CD4-positive, alpha-beta memory T cell (primary cell): ENCODE measurements at regions of chr5 and their contacts with region 1.

Region 1: DNA sequence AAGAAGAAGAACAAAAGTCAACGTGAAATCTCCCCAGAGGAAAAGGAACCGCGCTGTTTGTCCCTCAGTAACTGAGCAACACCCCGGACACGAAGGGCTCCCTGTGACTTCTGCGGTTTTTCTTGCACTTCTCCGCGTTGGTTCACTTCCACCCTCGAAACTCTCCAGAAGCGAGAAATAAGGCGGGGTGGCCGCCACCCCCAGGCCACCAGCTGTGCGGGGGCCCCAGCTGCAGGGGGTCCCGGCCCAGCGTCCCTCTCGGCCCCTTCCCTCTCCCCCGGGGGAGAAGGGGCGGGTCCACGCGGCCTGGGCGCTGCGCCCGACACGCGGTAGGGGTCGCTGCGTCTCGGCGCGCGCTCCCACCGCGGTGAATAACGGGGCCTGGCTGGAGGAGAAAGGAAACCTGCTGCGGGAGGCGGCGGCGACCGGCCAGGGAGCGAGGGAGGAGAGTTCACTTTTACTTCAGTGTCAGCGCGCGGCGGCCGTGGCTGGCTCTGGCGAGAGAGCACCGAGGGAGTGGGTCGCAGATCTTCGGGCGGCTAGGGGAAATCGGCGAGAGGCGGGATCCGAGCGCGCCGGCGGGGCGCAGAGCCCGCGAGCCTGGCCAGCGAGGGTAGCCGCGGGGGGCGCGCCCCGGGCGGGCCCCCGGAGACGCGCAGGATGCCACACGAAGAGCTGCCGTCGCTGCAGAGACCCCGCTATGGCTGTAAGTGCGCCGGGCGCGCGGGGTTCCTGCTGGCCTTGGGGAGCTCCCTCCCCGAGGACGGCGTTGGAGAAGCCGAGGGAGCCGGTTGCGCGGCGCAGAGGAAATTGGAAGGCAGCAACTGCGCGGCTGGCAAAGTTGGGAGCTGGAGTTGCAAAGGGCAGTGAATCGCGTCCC is at the start of gene IQGAP2:
- DNase-seq: peak; percentile 91 to 96 (median 94)
- H3K4me3 ChIP-seq: peak within 1 kb of the TSS; percentile 68 to 82
- H3K4me3 Mint-ChIP-seq: peak within 1 kb of the TSS; percentile 95 to 98 (median 97)
- H3K27ac ChIP-seq: peak within 1 kb of the TSS; percentile 93
- H3K27ac Mint-ChIP-seq: peak within 1 kb of the TSS; percentile 96 to 99 (median 98)
- H3K4me1 ChIP-seq: peaks cover 56% of the 10 kb centered on the region
- H3K4me1 Mint-ChIP-seq: peaks cover 45 to 72% (median 54%) of the 10 kb centered on the region in 4 donors
- H3K27me3 ChIP-seq: no peaks in the 10 kb centered on the region
- H3K27me3 Mint-ChIP-seq: no peaks in the 10 kb centered on the region
- total RNA-seq, gene IQGAP2: 125 to 126 TPM

Region 2: GRCh38 chr5:75717082-75717922 is 685.8 kb before region 1 on chr5 and contains the start of gene POC5:
- CTCF ChIA-PET with region 1: no interaction called
- POLR2A ChIA-PET with region 1: no interaction called
- intact Hi-C with region 1: loop called (anchors 1 kb)
- DNase-seq: peak; percentile 98 to 99 (median 98)
- H3K4me3 ChIP-seq: peak within 1 kb of the TSS; percentile 74 to 95
- H3K4me3 Mint-ChIP-seq: peak within 1 kb of the TSS; percentile 99 to 100 (median 100)
- H3K27ac ChIP-seq: peak within 1 kb of the TSS; percentile 74
- H3K27ac Mint-ChIP-seq: peak within 1 kb of the TSS; percentile 98 to 100 (median 99)
- H3K4me1 ChIP-seq: peaks cover 18% of the 10 kb centered on the region
- H3K4me1 Mint-ChIP-seq: peaks cover 29 to 43% (median 36%) of the 10 kb centered on the region in 4 donors
- H3K27me3 ChIP-seq: no peaks in the 10 kb centered on the region
- H3K27me3 Mint-ChIP-seq: no peaks in the 10 kb centered on the region
- total RNA-seq, gene POC5: 15.1 to 20.0 TPM

Region 3: DNA sequence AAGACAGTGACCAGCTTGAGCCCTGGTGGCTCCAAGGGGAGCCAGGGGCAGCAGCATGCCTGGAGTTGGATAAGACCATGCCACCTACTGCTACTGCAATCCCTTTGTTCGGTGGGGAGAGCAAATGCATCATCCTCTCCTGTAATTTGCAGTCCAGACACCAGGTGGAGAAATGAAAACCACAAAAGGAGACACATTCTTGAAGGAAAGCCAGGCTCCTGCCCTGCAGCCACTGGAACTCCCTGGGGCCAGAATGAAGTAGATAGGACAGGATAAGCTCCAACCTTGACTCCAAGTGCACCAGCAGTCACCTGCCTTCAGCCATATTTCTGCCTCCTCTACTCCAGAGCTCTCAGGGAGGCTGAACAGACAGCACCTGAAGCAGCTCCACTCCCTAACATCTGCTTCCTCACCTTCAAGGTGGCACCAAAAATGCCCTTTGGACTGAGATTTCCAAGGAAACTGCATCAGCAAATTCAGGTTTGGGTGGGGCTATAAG is 65.1 kb before region 1 on chr5:
- CTCF ChIA-PET with region 1: interaction called, 17 read pairs
- POLR2A ChIA-PET with region 1: interaction called, 55 read pairs
- intact Hi-C with region 1: loop called (anchors 1 kb)
- DNase-seq: peak; percentile 55 to 62 (median 58)
- H3K4me3 ChIP-seq: no peak overlapping the region
- H3K4me3 Mint-ChIP-seq: peak overlapping the region in 4 of 8 donors; percentile 16 to 54 (median 25)
- H3K27ac ChIP-seq: no peak overlapping the region
- H3K27ac Mint-ChIP-seq: peak overlapping the region in 5 of 7 donors; percentile 36 to 70 (median 66)
- H3K4me1 ChIP-seq: peaks cover 33% of the 10 kb centered on the region
- H3K4me1 Mint-ChIP-seq: peaks cover 28 to 42% (median 30%) of the 10 kb centered on the region in 4 donors
- H3K27me3 ChIP-seq: no peaks in the 10 kb centered on the region
- H3K27me3 Mint-ChIP-seq: no peaks in the 10 kb centered on the region

Region 4: GRCh38 chr5:76451031-76451701 is 48.0 kb after region 1 on chr5:
- CTCF ChIA-PET with region 1: interaction called, 6 read pairs
- POLR2A ChIA-PET with region 1: interaction called, 8 read pairs
- intact Hi-C with region 1: loop called (anchors 5 kb)
- DNase-seq: no peak
- H3K4me3 ChIP-seq: no peak overlapping the region
- H3K4me3 Mint-ChIP-seq: peak overlapping the region in 5 of 8 donors; percentile 3 to 72 (median 52)
- H3K27ac ChIP-seq: no peak overlapping the region
- H3K27ac Mint-ChIP-seq: peak overlapping the region; percentile 4 to 80 (median 41)
- H3K4me1 ChIP-seq: peaks cover 49% of the 10 kb centered on the region
- H3K4me1 Mint-ChIP-seq: peaks cover 48 to 71% (median 59%) of the 10 kb centered on the region in 4 donors
- H3K27me3 ChIP-seq: no peaks in the 10 kb centered on the region
- H3K27me3 Mint-ChIP-seq: no peaks in the 10 kb centered on the region

Region 5: DNA sequence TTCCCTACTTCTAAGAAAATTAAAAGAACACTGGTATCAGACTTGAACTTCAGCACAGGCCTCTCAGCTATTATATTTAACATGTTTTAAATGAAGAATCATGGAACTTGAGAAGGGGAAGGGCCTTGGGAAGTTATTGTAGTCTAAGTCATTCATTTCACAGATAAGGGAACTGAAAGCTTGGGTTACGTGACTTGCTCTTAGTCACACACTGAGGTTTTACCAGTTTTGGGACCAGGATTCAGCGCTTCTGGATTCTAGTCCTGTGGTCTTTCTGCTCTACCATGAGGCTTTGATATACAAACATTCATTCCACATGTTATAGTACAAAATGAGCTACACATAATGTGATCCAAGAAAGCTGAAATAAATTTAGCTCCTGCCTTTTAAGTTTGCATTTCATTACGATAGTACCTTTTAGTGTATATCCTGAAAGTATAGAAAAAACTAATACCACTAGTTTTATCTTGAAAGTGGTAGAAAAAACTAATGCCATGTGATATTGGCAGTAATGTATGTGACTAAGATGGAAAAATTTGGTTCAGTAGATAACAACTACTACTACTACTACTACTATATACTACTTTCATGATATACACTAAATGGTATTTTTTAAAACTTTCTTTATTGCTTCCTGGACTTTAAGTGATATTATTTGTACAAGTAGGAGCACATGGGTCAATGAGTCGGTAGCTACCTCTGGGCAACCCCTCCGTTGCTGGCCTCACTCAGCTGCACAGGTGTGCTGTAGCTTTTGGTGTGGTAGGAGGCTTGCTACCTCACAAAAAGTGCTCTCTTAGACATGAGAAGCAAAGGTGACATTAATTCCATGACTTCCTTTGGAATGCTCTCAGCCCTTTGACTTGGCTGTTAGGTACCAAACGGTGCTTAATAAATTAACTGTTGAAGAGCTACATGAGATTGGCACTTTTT is 179.4 kb after region 1 on chr5:
- CTCF ChIA-PET with region 1: interaction called, 63 read pairs
- POLR2A ChIA-PET with region 1: interaction called, 35 read pairs
- intact Hi-C with region 1: loop called (anchors 1 kb)
- DNase-seq: no peak
- H3K4me3 ChIP-seq: no peak overlapping the region
- H3K4me3 Mint-ChIP-seq: no peak overlapping the region
- H3K27ac ChIP-seq: no peak overlapping the region
- H3K27ac Mint-ChIP-seq: peak overlapping the region in 6 of 7 donors; percentile 12 to 76 (median 46)
- H3K4me1 ChIP-seq: peaks cover 16% of the 10 kb centered on the region
- H3K4me1 Mint-ChIP-seq: peaks cover 13 to 37% (median 18%) of the 10 kb centered on the region in 4 donors
- H3K27me3 ChIP-seq: no peaks in the 10 kb centered on the region
- H3K27me3 Mint-ChIP-seq: no peaks in the 10 kb centered on the region

Region 6: GRCh38 chr5:76649140-76649539 is 246.0 kb after region 1 on chr5:
- CTCF ChIA-PET with region 1: no interaction called
- POLR2A ChIA-PET with region 1: no interaction called
- intact Hi-C with region 1: no loop called
- DNase-seq: no peak
- H3K4me3 ChIP-seq: no peak overlapping the region
- H3K4me3 Mint-ChIP-seq: no peak overlapping the region
- H3K27ac ChIP-seq: no peak overlapping the region
- H3K27ac Mint-ChIP-seq: peak overlapping the region in 1 of 7 donors; percentile 81
- H3K4me1 ChIP-seq: no peaks in the 10 kb centered on the region
- H3K4me1 Mint-ChIP-seq: peaks cover 0 to 6% (median 1%) of the 10 kb centered on the region in 4 donors
- H3K27me3 ChIP-seq: no peaks in the 10 kb centered on the region
- H3K27me3 Mint-ChIP-seq: no peaks in the 10 kb centered on the region

Region 7: GRCh38 chr5:76771705-76772405 is 368.7 kb after region 1 on chr5:
- CTCF ChIA-PET with region 1: interaction called, 3 read pairs
- POLR2A ChIA-PET with region 1: interaction called, 5 read pairs
- intact Hi-C with region 1: loop called (anchors 10 kb)
- DNase-seq: no peak
- H3K4me3 ChIP-seq: no peak overlapping the region
- H3K4me3 Mint-ChIP-seq: no peak overlapping the region
- H3K27ac ChIP-seq: no peak overlapping the region
- H3K27ac Mint-ChIP-seq: peak overlapping the region in 2 of 7 donors; percentile 43 to 52
- H3K4me1 ChIP-seq: peaks cover 3% of the 10 kb centered on the region
- H3K4me1 Mint-ChIP-seq: peaks cover 0 to 6% (median 4%) of the 10 kb centered on the region in 4 donors
- H3K27me3 ChIP-seq: no peaks in the 10 kb centered on the region
- H3K27me3 Mint-ChIP-seq: no peaks in the 10 kb centered on the region